Panc1 (cell line): ENCODE measurements at regions of chr15 and their contacts with region 1.

Region 1: GRCh38 chr15:89177633-89178306 is 43.6 kb downstream of the RLBP1 start:
- DNase-seq: peak; percentile 36
- ATAC-seq: peak; percentile 80
- H3K4me3 ChIP-seq: no peak overlapping the region
- H3K27ac ChIP-seq: no peak overlapping the region; the same call in none of the 2 replicates
- H3K4me1 ChIP-seq: no peaks in the 10 kb centered on the region
- H3K27me3 ChIP-seq: no peaks in the 10 kb centered on the region
- CTCF ChIP-seq: peak; percentile 91

Region 2: GRCh38 chr15:88878720-88879184 is 299.0 kb before region 1 on chr15:
- CTCF ChIA-PET with region 1: no interaction called
- POLR2A ChIA-PET with region 1: no interaction called
- in situ Hi-C with region 1: no loop called
- intact Hi-C with region 1: loop called (anchors 5 kb)
- DNase-seq: no peak
- ATAC-seq: peak; percentile 84
- H3K4me3 ChIP-seq: no peak overlapping the region
- H3K27ac ChIP-seq: no peak overlapping the region
- H3K4me1 ChIP-seq: no peaks in the 10 kb centered on the region
- H3K27me3 ChIP-seq: no peaks in the 10 kb centered on the region
- CTCF ChIP-seq: peak; percentile 95

Region 3: DNA sequence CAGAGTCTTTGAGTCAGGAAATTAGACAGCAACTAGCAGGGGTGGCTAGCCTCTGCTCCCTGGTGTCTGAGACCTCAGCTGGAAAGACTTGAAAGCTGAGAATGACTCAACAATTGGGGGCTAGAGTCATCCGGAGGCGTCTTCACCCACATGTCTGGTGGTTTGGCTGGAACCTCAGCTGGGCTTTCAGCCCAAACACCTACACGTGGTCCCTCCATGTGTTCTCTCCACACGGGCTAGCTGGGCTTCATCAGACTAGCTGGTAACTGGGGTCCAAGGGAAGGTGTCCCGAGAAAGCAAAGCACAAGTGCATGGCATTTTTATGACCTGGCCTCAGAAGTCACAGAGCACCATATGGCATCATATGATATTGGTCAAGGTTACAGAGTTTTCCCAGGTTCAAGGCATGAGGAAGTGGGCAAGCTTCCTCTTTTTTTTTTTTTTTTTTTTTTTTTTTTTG is 109.4 kb before region 1 on chr15:
- CTCF ChIA-PET with region 1: no interaction called
- POLR2A ChIA-PET with region 1: no interaction called
- in situ Hi-C with region 1: no loop called
- intact Hi-C with region 1: no loop called
- DNase-seq: no peak
- ATAC-seq: no peak
- H3K4me3 ChIP-seq: no peak overlapping the region
- H3K27ac ChIP-seq: no peak overlapping the region
- H3K4me1 ChIP-seq: no peaks in the 10 kb centered on the region
- H3K27me3 ChIP-seq: no peaks in the 10 kb centered on the region
- CTCF ChIP-seq: no peak

Region 4: GRCh38 chr15:89197503-89197971 is 19.8 kb after region 1 on chr15:
- CTCF ChIA-PET with region 1: no interaction called
- POLR2A ChIA-PET with region 1: no interaction called
- in situ Hi-C with region 1: no loop called
- intact Hi-C with region 1: no loop called
- DNase-seq: no peak
- ATAC-seq: no peak
- H3K4me3 ChIP-seq: no peak overlapping the region
- H3K27ac ChIP-seq: no peak overlapping the region
- H3K4me1 ChIP-seq: no peaks in the 10 kb centered on the region
- H3K27me3 ChIP-seq: no peaks in the 10 kb centered on the region
- CTCF ChIP-seq: no peak